Heart left ventricle (tissue), 16 donors: ENCODE measurements at regions of chr11 and their contacts with region 1.

Region 1: DNA sequence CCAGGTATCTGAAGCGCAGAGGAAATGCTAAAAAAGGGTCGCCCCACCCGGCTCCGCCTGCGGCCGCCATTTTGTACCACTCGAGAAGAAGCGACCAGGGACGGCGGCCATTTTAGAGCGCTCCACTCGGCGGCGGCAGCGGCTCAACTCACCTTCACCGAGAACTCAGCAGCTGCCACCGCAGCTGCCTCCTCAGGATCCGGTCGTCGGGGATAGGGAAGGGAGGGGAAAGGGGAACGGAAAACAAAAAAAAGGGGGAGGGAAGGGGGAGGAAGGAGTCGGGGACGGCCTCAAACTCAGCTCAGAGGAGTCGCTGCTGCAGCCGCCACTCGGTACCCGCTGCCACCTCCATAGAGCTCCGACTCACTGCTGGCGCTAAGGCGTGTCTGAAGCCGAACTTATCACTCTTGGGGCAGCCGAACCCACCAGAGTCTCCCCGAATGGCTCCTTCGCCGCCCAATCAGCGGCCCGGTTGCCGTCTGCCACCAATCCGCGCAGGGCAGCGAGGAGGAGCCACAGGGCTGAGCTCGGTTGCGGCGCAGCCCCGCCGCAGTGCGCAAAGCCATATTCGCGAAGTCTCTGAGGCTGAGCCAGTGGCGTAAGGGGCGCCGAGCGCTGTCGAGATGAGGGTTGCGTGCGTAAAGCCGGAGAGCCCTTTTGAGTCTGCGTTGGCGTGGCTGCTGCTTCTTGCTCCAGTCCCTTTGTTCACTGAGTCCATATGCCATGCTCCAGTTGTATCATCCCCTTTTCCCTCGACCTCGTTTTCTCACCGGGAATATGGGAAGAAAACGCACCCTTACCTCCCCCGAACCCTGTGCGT is at the start of gene EIF4G2:
- DNase-seq: peak; percentile 99
- ATAC-seq: peak; percentile 95 to 98 (median 98)
- H3K4me3 ChIP-seq: peak within 1 kb of the TSS; percentile 61 to 99 (median 93)
- H3K27ac ChIP-seq: peak within 1 kb of the TSS; percentile 94 to 100 (median 98)
- H3K4me1 ChIP-seq: peaks cover 15 to 46% (median 40%) of the 10 kb centered on the region in 12 donors
- H3K27me3 ChIP-seq: no peaks in the 10 kb centered on the region
- CTCF ChIP-seq: peak in 2 of 12 donors; percentile 12 to 25
- POLR2A ChIP-seq: peak; percentile 82 to 99
- total RNA-seq, gene EIF4G2: 473 to 1,111 (median 849) TPM

Region 2: GRCh38 chr11:10750838-10751580 is 57.8 kb before region 1 on chr11 and contains the start of gene CTR9:
- intact Hi-C with region 1: loop called in 1 of 10 experiments (anchors 5 kb)
- DNase-seq: peak; percentile 93 to 96 (median 96)
- ATAC-seq: peak; percentile 96 to 98 (median 98)
- H3K4me3 ChIP-seq: peak within 1 kb of the TSS; percentile 61 to 98 (median 92)
- H3K27ac ChIP-seq: peak within 1 kb of the TSS; percentile 87 to 98 (median 92)
- H3K4me1 ChIP-seq: peaks cover 0 to 25% (median 14%) of the 10 kb centered on the region in 12 donors
- H3K27me3 ChIP-seq: no peaks in the 10 kb centered on the region
- CTCF ChIP-seq: peak in 7 of 12 donors; percentile 16 to 59 (median 34)
- POLR2A ChIP-seq: peak in 1 of 2 donors; percentile 93
- total RNA-seq, gene CTR9: 14.7 to 28.4 (median 20.8) TPM

Region 3: GRCh38 chr11:10792398-10792975 is 16.3 kb before region 1 on chr11:
- intact Hi-C with region 1: loop called in 1 of 10 experiments (anchors 1 kb)
- DNase-seq: peak; percentile 87 to 94 (median 92)
- ATAC-seq: peak; percentile 91 to 96 (median 92)
- H3K4me3 ChIP-seq: peak overlapping the region in 5 of 12 donors; percentile 3 to 41 (median 10)
- H3K27ac ChIP-seq: no peak overlapping the region
- H3K4me1 ChIP-seq: peaks cover 0 to 17% (median 5%) of the 10 kb centered on the region in 12 donors
- H3K27me3 ChIP-seq: no peaks in the 10 kb centered on the region
- CTCF ChIP-seq: peak; percentile 85 to 98 (median 92)
- POLR2A ChIP-seq: no peak

Region 4: GRCh38 chr11:10899121-10899830 is 90.5 kb after region 1 on chr11:
- intact Hi-C with region 1: loop called in 4 of 10 experiments (anchors 5 to 10 kb)
- DNase-seq: peak; percentile 45 to 81 (median 75)
- ATAC-seq: peak; percentile 21 to 77 (median 68)
- H3K4me3 ChIP-seq: peak overlapping the region in 1 of 12 donors; percentile 4
- H3K27ac ChIP-seq: peak overlapping the region; percentile 51 to 98 (median 90)
- H3K4me1 ChIP-seq: peaks cover 10 to 55% (median 33%) of the 10 kb centered on the region in 12 donors
- H3K27me3 ChIP-seq: no peaks in the 10 kb centered on the region
- CTCF ChIP-seq: no peak
- POLR2A ChIP-seq: no peak

Region 5: GRCh38 chr11:10911907-10912306 is 103.1 kb after region 1 on chr11:
- intact Hi-C with region 1: loop called in 7 of 10 experiments (anchors 5 to 10 kb)
- DNase-seq: no peak
- ATAC-seq: peak; percentile 7 to 42 (median 30)
- H3K4me3 ChIP-seq: peak overlapping the region in 1 of 12 donors; percentile 18
- H3K27ac ChIP-seq: peak overlapping the region in 6 of 12 donors; percentile 30 to 65 (median 42)
- H3K4me1 ChIP-seq: peaks cover 0 to 26% (median 8%) of the 10 kb centered on the region in 12 donors
- H3K27me3 ChIP-seq: no peaks in the 10 kb centered on the region
- CTCF ChIP-seq: peak in 3 of 12 donors; percentile 7 to 28 (median 11)
- POLR2A ChIP-seq: no peak

Region 6: GRCh38 chr11:11841723-11842420 is 1033.1 kb after region 1 on chr11 and contains the start of gene USP47:
- intact Hi-C with region 1: loop called in 1 of 10 experiments (anchors 10 kb)
- DNase-seq: peak; percentile 93 to 96 (median 95)
- ATAC-seq: peak; percentile 78 to 93 (median 92)
- H3K4me3 ChIP-seq: peak within 1 kb of the TSS; percentile 54 to 86 (median 77)
- H3K27ac ChIP-seq: peak within 1 kb of the TSS; percentile 87 to 99 (median 96)
- H3K4me1 ChIP-seq: peaks cover 0 to 51% (median 36%) of the 10 kb centered on the region in 12 donors
- H3K27me3 ChIP-seq: no peaks in the 10 kb centered on the region
- CTCF ChIP-seq: peak in 11 of 12 donors; percentile 33 to 77 (median 57)
- POLR2A ChIP-seq: peak in 1 of 2 donors; percentile 82
- total RNA-seq, gene USP47: 42.3 to 89.6 (median 54.3) TPM